Activated CD4-positive, alpha-beta T cell treated with anti-CD3 and anti-CD28 coated beads, Interleukin-2, amount 10 ng/mL, durations not matched to agents 24 days and 14 days (primary cell): ENCODE measurements at regions of chr6 and their contacts with region 1.

Region 1: DNA sequence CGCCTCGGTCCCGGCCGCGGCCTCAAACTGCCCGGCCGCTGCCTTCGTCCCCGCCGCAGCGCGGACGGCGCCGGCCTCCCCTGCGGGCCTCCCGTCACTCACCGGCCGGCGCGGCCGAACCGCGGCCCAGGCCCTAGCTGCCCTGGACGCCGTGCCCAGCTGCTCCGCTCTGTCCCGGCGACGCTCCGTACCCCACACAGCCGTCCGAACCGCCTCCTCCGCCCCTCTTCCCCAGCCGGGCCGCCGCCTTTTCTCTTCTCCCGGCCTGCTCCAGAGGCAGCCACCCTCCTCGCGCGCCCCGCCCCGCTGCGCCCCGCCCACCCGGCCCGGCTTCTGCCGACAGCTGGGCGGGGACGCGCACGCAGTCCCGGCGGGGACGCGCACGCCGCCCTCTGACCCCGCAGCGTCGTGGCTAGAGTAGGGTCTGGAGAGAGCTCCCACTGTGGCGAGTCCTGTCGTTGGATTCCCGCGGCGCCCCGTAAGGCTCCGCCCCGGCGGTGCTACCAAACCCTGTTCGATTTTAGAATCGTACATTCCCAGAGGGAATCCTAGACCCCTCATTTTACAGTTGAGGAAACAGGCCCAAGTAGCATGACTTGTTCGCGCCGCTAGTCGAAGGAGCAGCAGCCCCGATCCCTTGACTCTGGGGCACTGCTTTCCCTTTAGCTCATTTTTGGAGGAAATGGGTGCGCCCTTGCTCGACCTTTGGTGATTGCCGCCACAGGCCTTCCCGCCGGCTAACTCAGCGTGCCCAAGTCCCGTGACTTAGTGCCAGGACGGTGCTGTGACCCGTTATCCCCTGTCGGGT is at the start of gene FBXO30:
- DNase-seq: peak; percentile 97
- H3K4me3 Mint-ChIP-seq: peak within 1 kb of the TSS; percentile 90
- H3K27ac Mint-ChIP-seq: peak within 1 kb of the TSS; percentile 90
- H3K4me1 Mint-ChIP-seq: peaks cover 29% of the 10 kb centered on the region
- H3K27me3 Mint-ChIP-seq: no peaks in the 10 kb centered on the region
- total RNA-seq, gene FBXO30: 6.3 and 6.6 TPM in 2 replicates

Region 2: DNA sequence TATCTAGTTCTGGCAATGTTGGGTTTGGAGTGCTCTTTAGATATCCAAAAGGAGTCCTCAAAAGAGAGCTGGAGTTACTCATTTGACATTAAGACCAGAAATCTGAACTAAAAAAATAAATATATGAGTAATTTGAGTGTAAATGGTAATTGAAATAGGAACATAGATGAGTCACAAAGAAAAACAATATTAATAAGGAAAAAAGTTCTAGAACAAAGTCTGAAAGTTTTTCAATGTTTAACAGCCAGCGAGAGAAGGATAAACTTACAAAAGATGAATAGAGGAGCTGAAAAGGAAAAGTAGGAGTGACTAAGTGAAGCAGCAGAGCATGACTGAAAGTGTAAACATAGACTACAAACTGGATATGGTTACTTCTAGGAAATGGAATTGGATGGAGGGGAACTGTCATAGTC is 126.2 kb before region 1 on chr6:
- intact Hi-C with region 1: no loop called
- DNase-seq: no peak
- H3K4me3 Mint-ChIP-seq: no peak overlapping the region
- H3K27ac Mint-ChIP-seq: no peak overlapping the region
- H3K4me1 Mint-ChIP-seq: no peaks in the 10 kb centered on the region
- H3K27me3 Mint-ChIP-seq: no peaks in the 10 kb centered on the region

Region 3: DNA sequence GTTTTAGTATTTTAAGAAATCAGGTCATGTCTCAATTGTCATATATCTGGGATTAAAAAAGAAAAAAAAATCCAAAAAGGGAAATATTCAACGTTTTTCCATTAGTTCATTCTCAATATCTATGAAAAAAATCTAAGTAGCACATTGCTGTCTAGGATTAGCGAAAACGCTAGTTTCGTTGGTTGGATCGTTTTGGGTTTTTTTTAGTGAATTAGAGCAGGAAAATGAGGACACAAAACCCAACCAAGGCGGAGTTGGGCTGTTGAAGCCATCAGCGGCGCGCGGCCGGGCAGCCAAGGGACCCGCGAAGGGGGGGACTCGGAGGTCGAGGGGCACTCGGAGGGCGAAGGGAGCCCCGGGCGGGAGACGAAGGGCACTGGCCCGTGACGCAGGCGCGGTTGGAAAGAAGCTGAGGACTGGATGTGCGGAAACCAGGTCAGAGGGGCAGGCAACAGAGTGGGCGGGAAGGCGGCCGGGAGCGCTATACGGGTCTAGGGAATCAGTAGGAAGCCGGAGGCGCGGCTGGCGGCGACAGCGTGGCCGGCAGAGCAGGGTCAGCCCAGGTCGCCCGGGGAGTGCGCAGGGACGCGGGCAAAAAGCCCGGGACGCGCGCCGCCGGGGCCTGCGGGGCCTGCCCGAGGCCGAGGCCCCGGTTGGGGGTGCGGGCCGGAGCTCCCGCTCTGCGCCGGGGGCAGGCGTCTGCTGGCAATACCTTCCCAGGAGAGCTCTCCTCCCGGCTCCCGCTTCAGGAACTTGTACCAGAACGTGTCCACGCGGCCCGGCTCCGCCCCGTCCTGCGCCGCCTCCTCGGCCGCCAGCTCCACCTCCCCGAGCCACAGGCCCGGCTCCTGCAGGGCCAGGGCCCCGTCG is 80.0 kb before region 1 on chr6:
- intact Hi-C with region 1: loop called (anchors 1 kb)
- DNase-seq: peak; percentile 91
- H3K4me3 Mint-ChIP-seq: peak overlapping the region; percentile 92
- H3K27ac Mint-ChIP-seq: peak overlapping the region; percentile 98
- H3K4me1 Mint-ChIP-seq: peaks cover 14% of the 10 kb centered on the region
- H3K27me3 Mint-ChIP-seq: no peaks in the 10 kb centered on the region

Region 4: GRCh38 chr6:145798530-145798929 is 16.2 kb before region 1 on chr6:
- intact Hi-C with region 1: no loop called
- DNase-seq: no peak
- H3K4me3 Mint-ChIP-seq: no peak overlapping the region
- H3K27ac Mint-ChIP-seq: no peak overlapping the region
- H3K4me1 Mint-ChIP-seq: peaks cover 2% of the 10 kb centered on the region
- H3K27me3 Mint-ChIP-seq: no peaks in the 10 kb centered on the region

Region 5: DNA sequence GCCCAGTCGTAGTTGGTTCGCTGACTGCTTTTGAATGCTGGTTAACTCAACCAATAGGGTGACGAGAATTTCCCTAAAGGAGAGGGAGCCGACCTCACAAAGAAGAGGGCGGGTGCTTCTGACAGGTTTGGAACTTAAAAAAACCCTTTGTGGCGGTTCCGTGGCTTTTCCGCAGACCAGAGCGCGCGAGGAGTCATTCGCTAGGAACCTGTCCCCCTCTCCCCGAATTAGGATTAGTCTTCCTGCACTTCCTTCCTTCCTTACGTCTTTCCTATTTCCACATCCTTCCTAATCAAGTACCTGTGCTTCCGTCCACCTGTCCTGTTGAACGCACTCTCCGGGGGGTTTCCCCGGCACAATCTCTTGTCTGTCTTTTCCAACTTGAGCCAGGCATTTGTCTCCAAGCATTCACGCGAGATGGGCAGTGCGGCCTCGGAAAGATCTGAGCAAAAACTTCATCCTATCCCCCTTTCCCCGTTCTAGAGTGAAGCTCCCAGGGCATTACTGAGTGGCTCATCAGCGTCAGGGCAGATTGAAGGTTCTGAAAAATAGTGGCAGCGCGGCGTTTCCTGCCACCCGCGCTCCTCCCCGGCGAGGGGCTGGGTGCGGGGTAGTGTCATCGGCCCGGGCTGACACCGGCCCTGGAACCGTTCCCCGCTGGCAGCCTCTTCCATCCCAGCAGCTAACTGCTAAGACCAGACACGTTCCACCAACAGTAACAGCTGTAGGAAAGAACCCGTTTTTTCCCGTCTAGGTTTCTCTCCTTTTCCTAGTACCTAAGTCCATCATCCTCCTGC is 1388.0 kb after region 1 on chr6:
- intact Hi-C with region 1: loop called (anchors 10 kb)
- DNase-seq: peak; percentile 95
- H3K4me3 Mint-ChIP-seq: peak overlapping the region; percentile 98
- H3K27ac Mint-ChIP-seq: peak overlapping the region; percentile 93
- H3K4me1 Mint-ChIP-seq: peaks cover 32% of the 10 kb centered on the region
- H3K27me3 Mint-ChIP-seq: no peaks in the 10 kb centered on the region